Activated CD8-positive, alpha-beta T cell treated with anti-CD3 and anti-CD28 coated beads for 36 hours (primary cell): ENCODE measurements at regions of chr15 and their contacts with region 1.

Region 1: GRCh38 chr15:98518823-98519561 is 129.3 kb upstream of the IGF1R start:
- DNase-seq: peak; percentile 66
- ATAC-seq: peak; percentile 83
- H3K4me3 Mint-ChIP-seq: no peak overlapping the region
- H3K27ac Mint-ChIP-seq: no peak overlapping the region
- H3K4me1 Mint-ChIP-seq: no peaks in the 10 kb centered on the region
- H3K27me3 Mint-ChIP-seq: peaks cover 2% of the 10 kb centered on the region
- CTCF ChIP-seq: peak; percentile 64

Region 2: DNA sequence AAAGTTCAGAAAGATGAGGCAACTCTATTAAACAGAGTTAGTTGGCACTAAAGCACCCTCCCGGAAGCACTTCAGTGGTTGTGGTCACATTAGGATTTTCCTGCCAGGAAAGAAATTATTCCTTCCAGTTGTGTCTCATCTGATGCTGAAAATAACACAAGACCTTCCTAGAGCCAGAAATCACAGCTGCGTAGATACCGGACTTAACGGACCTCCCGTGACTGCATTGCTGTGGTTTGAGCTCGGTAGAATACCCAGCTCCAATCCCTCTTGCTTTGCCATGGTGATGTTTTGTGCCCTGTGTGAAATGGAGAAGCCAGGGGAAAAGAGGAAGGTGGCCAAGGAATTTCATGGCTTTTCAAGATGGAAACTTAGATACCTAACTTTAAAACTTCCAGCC is 85.6 kb before region 1 on chr15:
- CTCF ChIA-PET with region 1: no interaction called
- POLR2A ChIA-PET with region 1: no interaction called
- intact Hi-C with region 1: no loop called
- DNase-seq: no peak
- ATAC-seq: no peak
- H3K4me3 Mint-ChIP-seq: no peak overlapping the region
- H3K27ac Mint-ChIP-seq: no peak overlapping the region
- H3K4me1 Mint-ChIP-seq: peaks cover 3% of the 10 kb centered on the region
- H3K27me3 Mint-ChIP-seq: peaks cover 23% of the 10 kb centered on the region
- CTCF ChIP-seq: no peak

Region 3: GRCh38 chr15:98501192-98501591 is 17.8 kb before region 1 on chr15:
- CTCF ChIA-PET with region 1: interaction called, 10 read pairs
- POLR2A ChIA-PET with region 1: no interaction called
- intact Hi-C with region 1: no loop called
- DNase-seq: no peak
- ATAC-seq: no peak
- H3K4me3 Mint-ChIP-seq: no peak overlapping the region
- H3K27ac Mint-ChIP-seq: no peak overlapping the region
- H3K4me1 Mint-ChIP-seq: no peaks in the 10 kb centered on the region
- H3K27me3 Mint-ChIP-seq: peaks cover 24% of the 10 kb centered on the region
- CTCF ChIP-seq: no peak

Region 4: GRCh38 chr15:98548154-98548971 is 29.4 kb after region 1 on chr15:
- CTCF ChIA-PET with region 1: interaction called, 18 read pairs
- POLR2A ChIA-PET with region 1: no interaction called
- intact Hi-C with region 1: no loop called
- DNase-seq: peak; percentile 77
- ATAC-seq: peak; percentile 95
- H3K4me3 Mint-ChIP-seq: peak overlapping the region; percentile 71
- H3K27ac Mint-ChIP-seq: peak overlapping the region; percentile 66
- H3K4me1 Mint-ChIP-seq: peaks cover 12% of the 10 kb centered on the region
- H3K27me3 Mint-ChIP-seq: peaks cover 35% of the 10 kb centered on the region
- CTCF ChIP-seq: no peak

Region 5: DNA sequence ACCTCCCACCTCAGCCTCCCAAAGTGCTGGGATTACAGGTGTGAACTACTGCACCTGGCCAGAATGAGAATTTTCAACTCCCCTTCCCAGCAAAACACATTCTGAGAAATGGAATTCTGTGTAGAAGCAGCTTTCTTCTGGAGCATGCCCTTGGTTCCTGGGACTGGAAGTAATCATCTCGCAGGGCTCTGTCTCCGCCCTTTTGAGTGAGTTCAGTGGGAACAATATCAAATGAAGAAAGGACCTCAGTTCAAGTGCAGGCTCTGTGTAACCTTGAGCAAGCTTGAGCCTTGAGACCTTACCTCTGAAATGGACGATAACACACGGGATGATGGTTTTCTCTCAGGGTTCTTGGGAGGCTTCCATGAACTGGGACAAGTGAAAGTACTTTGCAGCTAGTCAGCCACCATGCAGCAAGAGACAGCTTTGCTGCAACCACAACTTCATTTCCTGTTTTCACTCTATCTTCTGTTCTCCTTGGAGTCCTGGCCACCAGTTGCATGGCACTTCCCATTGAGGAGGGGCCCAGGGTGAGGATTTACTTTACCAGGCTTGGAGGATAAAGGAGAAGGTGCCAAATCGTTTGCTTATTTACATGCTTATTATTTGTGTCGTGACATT is 93.6 kb after region 1 on chr15:
- CTCF ChIA-PET with region 1: interaction called, 11 read pairs
- POLR2A ChIA-PET with region 1: no interaction called
- intact Hi-C with region 1: no loop called
- DNase-seq: no peak
- ATAC-seq: no peak
- H3K4me3 Mint-ChIP-seq: no peak overlapping the region
- H3K27ac Mint-ChIP-seq: no peak overlapping the region
- H3K4me1 Mint-ChIP-seq: peaks cover 9% of the 10 kb centered on the region
- H3K27me3 Mint-ChIP-seq: no peaks in the 10 kb centered on the region
- CTCF ChIP-seq: no peak

Region 6: DNA sequence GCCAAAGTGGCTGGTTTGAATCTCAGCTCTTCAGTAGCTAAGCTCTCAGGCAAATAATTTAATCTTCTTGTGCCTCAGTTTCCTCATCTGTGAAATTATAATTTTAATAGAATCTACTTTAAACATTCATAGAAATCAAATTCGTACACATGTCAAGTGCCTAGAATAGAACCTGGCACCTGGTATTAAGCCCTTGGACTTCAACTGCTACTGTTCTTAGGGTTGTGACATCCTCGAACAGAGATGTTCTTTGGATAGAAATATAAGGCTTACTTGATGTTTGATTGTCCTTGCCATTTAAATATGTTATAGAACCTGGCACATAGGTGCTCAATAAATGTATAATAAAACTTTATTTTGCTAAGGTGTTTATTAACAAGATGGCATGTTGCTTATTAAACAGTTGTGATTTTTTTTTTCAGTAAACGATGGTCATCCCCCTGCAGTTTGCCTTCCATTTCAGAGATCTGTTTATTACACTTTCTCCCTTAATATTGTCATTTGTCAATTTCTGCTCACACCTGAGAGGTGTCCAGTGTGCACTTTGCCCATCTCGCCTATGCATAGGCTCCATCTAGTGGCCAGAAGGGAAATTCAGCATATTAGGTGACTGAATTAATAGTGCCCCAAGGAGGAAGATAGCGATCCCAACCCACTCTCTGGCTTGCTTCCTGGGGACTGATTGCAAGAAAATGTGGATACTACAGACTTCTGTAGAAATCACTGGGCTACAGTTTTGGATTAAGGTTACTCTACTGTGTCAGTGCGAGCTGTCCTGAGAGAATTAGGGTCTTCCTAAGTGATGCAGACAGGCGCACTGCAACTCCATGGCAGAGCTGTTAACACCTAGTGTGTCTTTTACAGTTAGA is 140.1 kb after region 1 on chr15:
- CTCF ChIA-PET with region 1: interaction called, 106 read pairs
- POLR2A ChIA-PET with region 1: no interaction called
- intact Hi-C with region 1: loop called (anchors 1 kb)
- DNase-seq: peak; percentile 32
- ATAC-seq: peak; percentile 88
- H3K4me3 Mint-ChIP-seq: no peak overlapping the region
- H3K27ac Mint-ChIP-seq: no peak overlapping the region
- H3K4me1 Mint-ChIP-seq: peaks cover 20% of the 10 kb centered on the region
- H3K27me3 Mint-ChIP-seq: no peaks in the 10 kb centered on the region
- CTCF ChIP-seq: peak; percentile 97

Region 7: GRCh38 chr15:98881526-98882520 is 362.8 kb after region 1 on chr15:
- CTCF ChIA-PET with region 1: interaction called, 20 read pairs
- POLR2A ChIA-PET with region 1: no interaction called
- intact Hi-C with region 1: no loop called
- DNase-seq: peak; percentile 14
- ATAC-seq: peak; percentile 51
- H3K4me3 Mint-ChIP-seq: no peak overlapping the region
- H3K27ac Mint-ChIP-seq: no peak overlapping the region
- H3K4me1 Mint-ChIP-seq: peaks cover 11% of the 10 kb centered on the region
- H3K27me3 Mint-ChIP-seq: no peaks in the 10 kb centered on the region
- CTCF ChIP-seq: peak; percentile 77

Region 8: GRCh38 chr15:98978153-98978552 is 459.2 kb after region 1 on chr15:
- CTCF ChIA-PET with region 1: no interaction called
- POLR2A ChIA-PET with region 1: no interaction called
- intact Hi-C with region 1: no loop called
- DNase-seq: no peak
- ATAC-seq: no peak
- H3K4me3 Mint-ChIP-seq: no peak overlapping the region
- H3K27ac Mint-ChIP-seq: no peak overlapping the region
- H3K4me1 Mint-ChIP-seq: no peaks in the 10 kb centered on the region
- H3K27me3 Mint-ChIP-seq: no peaks in the 10 kb centered on the region
- CTCF ChIP-seq: no peak